GM12878 (cell line): ENCODE measurements at regions of chr15 and their contacts with region 1.

Region 1: GRCh38 chr15:56821721-56822425 is 88.6 kb upstream of the ZNF280D start:
- DNase-seq: no peak
- ATAC-seq: peak; percentile 98
- H3K4me3 ChIP-seq: no peak overlapping the region
- H3K27ac ChIP-seq: no peak overlapping the region
- H3K4me1 ChIP-seq: no peaks in the 10 kb centered on the region
- H3K27me3 ChIP-seq: no peaks in the 10 kb centered on the region; a peak in 1 of 4 replicates
- CTCF ChIP-seq: peak; percentile 65 to 67 (median 66)
- EP300 ChIP-seq: no peak
- POLR2A ChIP-seq: no peak
- RAD21 ChIP-seq: peak; percentile 88

Region 2: GRCh38 chr15:57017024-57017423 is 195.2 kb after region 1 on chr15:
- CTCF ChIA-PET with region 1: no interaction called
- POLR2A ChIA-PET with region 1: no interaction called
- RAD21 ChIA-PET with region 1: no interaction called
- SMC1A ChIA-PET with region 1: no interaction called
- in situ Hi-C with region 1: no loop called
- intact Hi-C with region 1: no loop called
- DNase-seq: no peak
- ATAC-seq: peak; percentile 67
- H3K4me3 ChIP-seq: no peak overlapping the region
- H3K27ac ChIP-seq: no peak overlapping the region
- H3K4me1 ChIP-seq: no peaks in the 10 kb centered on the region
- H3K27me3 ChIP-seq: no peaks in the 10 kb centered on the region
- CTCF ChIP-seq: peak in 2 of 3 experiments; percentile 32 to 36; a peak in 2 of 6 replicates
- EP300 ChIP-seq: no peak
- POLR2A ChIP-seq: no peak
- RAD21 ChIP-seq: peak; percentile 65

Region 3: DNA sequence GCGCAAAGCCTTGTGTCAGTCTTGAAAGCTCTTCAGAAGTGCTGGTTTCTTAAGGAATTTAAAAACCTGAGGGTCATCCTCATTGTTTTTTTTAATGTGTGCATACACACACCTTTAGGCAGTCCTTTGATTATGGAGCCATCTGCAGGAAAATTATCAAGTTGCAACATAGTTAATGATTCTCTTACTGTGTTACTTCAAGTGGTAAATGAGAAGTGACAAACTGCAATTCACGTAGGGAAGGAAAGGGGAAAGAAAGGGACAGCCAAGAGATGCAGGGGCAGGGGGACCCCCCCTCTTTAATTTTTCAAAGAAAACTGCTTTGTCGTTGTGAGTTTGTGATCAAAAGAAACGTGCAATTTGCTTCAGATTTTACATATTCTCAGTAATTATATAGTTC is 392.0 kb after region 1 on chr15:
- CTCF ChIA-PET with region 1: interaction called, 6 read pairs
- POLR2A ChIA-PET with region 1: no interaction called
- RAD21 ChIA-PET with region 1: interaction called, 5 read pairs
- SMC1A ChIA-PET with region 1: interaction called, 5 read pairs
- in situ Hi-C with region 1: no loop called
- intact Hi-C with region 1: loop called (anchors 1 kb)
- DNase-seq: no peak
- ATAC-seq: peak; percentile 86
- H3K4me3 ChIP-seq: no peak overlapping the region
- H3K27ac ChIP-seq: no peak overlapping the region
- H3K4me1 ChIP-seq: no peaks in the 10 kb centered on the region
- H3K27me3 ChIP-seq: no peaks in the 10 kb centered on the region
- CTCF ChIP-seq: peak; percentile 42 to 67 (median 48); a peak in 5 of 6 replicates
- EP300 ChIP-seq: no peak
- POLR2A ChIP-seq: no peak
- RAD21 ChIP-seq: peak; percentile 83